ENCODE measurements at regions of chr3 and their contacts with region 1.

Region 1: GRCh38 chr3:184543843-184544512 is 17.6 kb upstream of the EPHB3 start:
- DNase-seq: peak in 1 of 2 experiments; percentile 94
- H3K4me3 ChIP-seq: no peak overlapping the region
- H3K27ac ChIP-seq: no peak overlapping the region
- H3K4me1 ChIP-seq: peaks cover 0 to 5% (median under 1%) of the 10 kb centered on the region in 4 experiments; a peak in 3 of 7 replicates
- H3K27me3 ChIP-seq: peaks cover 0 to 3% (median 0%) of the 10 kb centered on the region in 4 experiments; a peak in 1 of 7 replicates
- CTCF ChIP-seq: peak; percentile 56 to 94 (median 81)
- EP300 ChIP-seq: no peak
- POLR2A ChIP-seq: no peak
- RAD21 ChIP-seq: peak; percentile 94 to 96

Region 2: GRCh38 chr3:184362668-184363540 is 181.1 kb before region 1 on chr3:
- CTCF ChIA-PET with region 1: interaction called, 223 read pairs
- POLR2A ChIA-PET with region 1: interaction called, 3 read pairs
- DNase-seq: peak; percentile 93 to 95
- H3K4me3 ChIP-seq: peak overlapping the region; percentile 77 to 88 (median 80)
- H3K27ac ChIP-seq: peak overlapping the region; percentile 92
- H3K4me1 ChIP-seq: peaks cover 3 to 18% (median 12%) of the 10 kb centered on the region in 4 experiments
- H3K27me3 ChIP-seq: peaks cover 0 to 8% (median 3%) of the 10 kb centered on the region in 4 experiments; a peak in 3 of 7 replicates
- CTCF ChIP-seq: peak in 2 of 3 experiments; percentile 57 to 65; a peak in 3 of 4 replicates
- EP300 ChIP-seq: no peak; a peak in 1 of 3 replicates
- POLR2A ChIP-seq: peak in 1 of 2 experiments; percentile 86; a peak in 2 of 3 replicates
- RAD21 ChIP-seq: peak; percentile 11 to 30; a peak in 2 of 4 replicates

Region 3: DNA sequence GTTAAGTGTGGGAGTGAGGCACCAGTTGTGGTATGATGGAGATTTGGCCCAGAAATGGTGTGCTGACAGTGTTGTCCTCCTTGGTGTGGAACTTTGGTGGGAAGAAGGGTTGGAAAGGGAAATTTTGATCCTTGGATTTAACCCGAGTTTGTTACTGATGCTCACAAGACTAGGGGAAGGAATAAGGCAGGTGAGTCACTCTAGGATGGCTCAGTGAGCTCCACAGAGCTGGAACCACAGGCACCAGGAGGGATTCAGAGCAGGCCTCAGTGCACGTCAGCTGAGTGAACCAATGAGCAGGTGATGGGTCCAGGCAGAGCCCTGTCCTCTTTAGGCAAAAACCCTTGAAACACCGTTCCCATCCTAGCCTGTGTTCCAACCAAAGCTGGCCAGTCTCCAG is 152.7 kb before region 1 on chr3:
- CTCF ChIA-PET with region 1: interaction called, 20 read pairs
- POLR2A ChIA-PET with region 1: no interaction called
- DNase-seq: no peak
- H3K4me3 ChIP-seq: no peak overlapping the region
- H3K27ac ChIP-seq: no peak overlapping the region
- H3K4me1 ChIP-seq: peaks cover 0 to 3% (median 0%) of the 10 kb centered on the region in 4 experiments; a peak in 2 of 7 replicates
- H3K27me3 ChIP-seq: no peaks in the 10 kb centered on the region; a peak in 3 of 7 replicates
- CTCF ChIP-seq: no peak
- EP300 ChIP-seq: no peak
- POLR2A ChIP-seq: no peak
- RAD21 ChIP-seq: no peak

Region 4: GRCh38 chr3:184481984-184482671 is 61.9 kb before region 1 on chr3:
- CTCF ChIA-PET with region 1: interaction called, 69 read pairs
- POLR2A ChIA-PET with region 1: no interaction called
- DNase-seq: no peak
- H3K4me3 ChIP-seq: no peak overlapping the region
- H3K27ac ChIP-seq: no peak overlapping the region
- H3K4me1 ChIP-seq: no peaks in the 10 kb centered on the region
- H3K27me3 ChIP-seq: no peaks in the 10 kb centered on the region
- CTCF ChIP-seq: no peak
- EP300 ChIP-seq: no peak
- POLR2A ChIP-seq: no peak
- RAD21 ChIP-seq: no peak

Region 5: DNA sequence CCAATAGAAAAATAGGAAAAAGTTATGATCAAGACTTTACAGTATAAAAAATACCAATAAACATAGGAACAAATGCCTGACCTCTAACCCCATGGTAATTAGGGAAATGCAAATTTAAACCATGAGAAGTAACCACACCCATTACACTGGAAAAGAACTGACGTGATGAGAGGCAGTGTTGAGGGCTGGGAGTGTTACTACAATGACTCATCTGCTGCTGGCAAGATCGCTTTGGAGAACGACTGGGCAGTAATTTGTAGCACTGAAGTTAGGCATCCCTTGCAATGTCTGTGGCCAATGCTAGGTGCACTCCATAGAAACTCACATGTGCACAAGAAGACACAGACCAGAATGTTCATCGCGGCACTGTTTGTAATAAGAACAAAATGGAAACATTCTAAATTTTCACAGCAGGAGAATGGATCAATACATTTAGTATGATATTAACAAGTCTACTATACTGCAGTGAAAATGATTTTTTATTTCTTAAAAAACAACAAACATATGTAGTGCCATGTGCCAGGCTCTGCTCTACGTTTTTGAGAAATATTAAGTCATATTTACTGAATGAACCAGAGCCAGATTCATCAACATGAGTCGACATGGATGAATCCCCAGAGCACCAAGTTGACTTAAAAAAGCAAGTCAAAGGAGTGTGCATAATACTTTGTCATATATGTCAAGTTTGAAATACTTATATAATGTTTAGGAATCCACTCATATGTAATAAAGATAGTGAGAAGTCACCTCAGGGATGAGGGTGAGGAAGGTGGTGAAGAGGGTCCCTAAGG is 20.0 kb before region 1 on chr3:
- CTCF ChIA-PET with region 1: interaction called, 155 read pairs
- POLR2A ChIA-PET with region 1: interaction called, 22 read pairs
- DNase-seq: no peak
- H3K4me3 ChIP-seq: no peak overlapping the region; a peak in 1 of 8 replicates
- H3K27ac ChIP-seq: no peak overlapping the region
- H3K4me1 ChIP-seq: peaks cover 0 to 14% (median 9%) of the 10 kb centered on the region in 4 experiments
- H3K27me3 ChIP-seq: no peaks in the 10 kb centered on the region
- CTCF ChIP-seq: no peak
- EP300 ChIP-seq: no peak
- POLR2A ChIP-seq: peak in 1 of 2 experiments; percentile 33; a peak in 1 of 3 replicates
- RAD21 ChIP-seq: no peak

Region 6: DNA sequence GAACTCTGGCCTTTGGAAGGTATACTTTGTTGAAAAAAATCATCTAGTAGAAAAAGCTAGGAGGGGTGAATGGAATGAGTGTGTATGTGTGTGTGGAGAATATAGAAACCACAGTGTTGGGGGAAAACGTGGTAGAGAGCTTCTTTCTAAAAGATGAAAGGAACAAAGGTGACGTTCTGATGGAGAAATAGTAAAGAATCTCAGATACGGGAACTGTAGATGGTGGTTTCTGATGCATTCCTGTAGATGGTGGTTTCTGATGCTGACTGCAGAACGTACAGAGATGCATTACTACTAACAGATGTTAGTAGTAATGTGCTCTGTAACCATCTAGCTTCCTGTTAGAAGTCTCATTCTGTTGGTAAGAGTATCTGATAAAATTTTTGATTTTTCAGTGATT is 328.2 kb after region 1 on chr3:
- CTCF ChIA-PET with region 1: no interaction called
- POLR2A ChIA-PET with region 1: no interaction called
- DNase-seq: no peak
- H3K4me3 ChIP-seq: no peak overlapping the region
- H3K27ac ChIP-seq: no peak overlapping the region
- H3K4me1 ChIP-seq: no peaks in the 10 kb centered on the region
- H3K27me3 ChIP-seq: no peaks in the 10 kb centered on the region
- CTCF ChIP-seq: no peak
- EP300 ChIP-seq: no peak
- POLR2A ChIP-seq: no peak
- RAD21 ChIP-seq: no peak

Measured in H1 (cell line).